ENCODE measurements at regions of chr2 and their contacts with region 1.

Region 1: DNA sequence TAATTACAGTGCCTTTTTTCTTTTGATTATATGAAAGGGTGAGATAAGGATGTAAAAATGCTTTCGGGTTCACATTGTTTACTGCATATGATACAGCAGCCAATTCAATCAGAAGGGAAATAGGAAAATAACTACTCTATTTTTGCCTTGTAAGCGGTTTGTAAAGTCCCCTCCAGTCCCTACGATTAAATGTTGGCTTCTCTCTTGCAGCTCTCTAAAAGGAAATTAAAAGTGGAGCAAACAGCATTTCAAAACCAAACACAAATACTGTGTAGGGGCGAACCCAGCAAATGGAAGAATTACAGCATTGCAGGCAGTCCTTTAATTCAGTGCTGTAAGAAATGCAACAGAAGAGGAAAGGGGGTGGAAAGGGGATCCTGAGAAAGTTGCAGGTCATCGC is 18.9 kb downstream of the LYPD6B start:
- DNase-seq: no peak
- H3K4me3 ChIP-seq: no peak overlapping the region
- H3K27me3 ChIP-seq: no peaks in the 10 kb centered on the region
- CTCF ChIP-seq: no peak

Region 2: DNA sequence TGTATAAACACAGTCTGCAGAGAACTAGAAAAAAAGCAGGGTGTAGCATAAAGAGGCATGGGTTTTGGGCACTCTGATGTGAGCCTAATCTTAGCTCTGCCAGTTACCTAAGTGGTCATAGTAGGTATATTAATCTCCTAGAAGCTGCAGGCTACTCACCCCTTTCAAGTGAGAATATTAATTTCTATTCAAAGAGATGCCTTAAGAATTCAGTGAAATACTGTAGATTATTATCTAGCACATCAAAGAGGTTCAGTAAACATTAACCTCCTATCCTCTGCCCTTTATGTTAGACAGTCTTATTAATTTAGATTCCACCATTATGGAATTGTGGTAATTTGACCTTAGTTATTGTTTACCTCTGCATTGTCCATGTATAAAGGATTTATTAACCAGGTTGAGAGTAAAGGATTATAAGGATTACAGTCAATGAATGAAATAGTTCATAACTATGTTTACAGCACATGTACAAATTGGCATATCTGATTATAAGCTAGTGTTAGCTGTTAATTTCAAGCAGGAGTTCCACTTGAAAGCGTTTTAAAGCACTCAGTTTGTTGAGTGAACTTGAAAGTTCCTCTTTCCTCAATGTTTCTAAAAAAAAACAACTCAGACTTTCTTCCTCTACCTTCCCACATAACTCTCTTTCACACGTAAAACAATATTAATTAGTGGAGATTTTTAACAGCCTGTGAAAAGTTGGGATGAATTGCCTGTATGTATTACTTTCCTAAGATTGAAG is 563.4 kb before region 1 on chr2:
- CTCF ChIA-PET with region 1: no interaction called
- POLR2A ChIA-PET with region 1: no interaction called
- DNase-seq: no peak
- H3K4me3 ChIP-seq: no peak overlapping the region
- H3K27me3 ChIP-seq: no peaks in the 10 kb centered on the region
- CTCF ChIP-seq: no peak

Region 3: GRCh38 chr2:149080946-149081345 is 23.5 kb after region 1 on chr2:
- CTCF ChIA-PET with region 1: no interaction called
- POLR2A ChIA-PET with region 1: interaction called, 24 read pairs
- DNase-seq: no peak
- H3K4me3 ChIP-seq: no peak overlapping the region
- H3K27me3 ChIP-seq: no peaks in the 10 kb centered on the region
- CTCF ChIP-seq: no peak

Region 4: DNA sequence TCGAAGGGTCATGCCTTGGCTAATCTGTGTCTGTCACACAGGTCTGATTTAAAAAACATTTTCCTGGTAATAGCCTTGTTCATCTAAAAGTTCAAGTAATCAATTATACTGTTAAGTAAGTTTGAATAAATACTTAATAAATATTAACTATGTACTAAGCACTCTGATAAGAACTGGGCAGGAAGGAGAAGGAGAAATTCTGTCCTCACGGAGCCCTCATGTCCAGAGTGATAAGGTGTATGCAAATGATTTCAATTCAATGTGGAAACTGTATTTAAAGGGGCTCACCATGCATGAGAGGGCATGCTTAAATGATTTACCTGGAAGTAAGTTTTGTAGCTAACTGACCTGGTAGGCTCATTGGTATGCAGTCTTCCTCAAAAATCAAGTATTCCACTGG is 179.0 kb after region 1 on chr2:
- CTCF ChIA-PET with region 1: no interaction called
- POLR2A ChIA-PET with region 1: no interaction called
- DNase-seq: no peak
- H3K4me3 ChIP-seq: no peak overlapping the region
- H3K27me3 ChIP-seq: no peaks in the 10 kb centered on the region
- CTCF ChIP-seq: no peak

Region 5: GRCh38 chr2:149346272-149346671 is 288.9 kb after region 1 on chr2:
- CTCF ChIA-PET with region 1: no interaction called
- POLR2A ChIA-PET with region 1: no interaction called
- DNase-seq: no peak
- H3K4me3 ChIP-seq: no peak overlapping the region
- H3K27me3 ChIP-seq: no peaks in the 10 kb centered on the region
- CTCF ChIP-seq: no peak

Measured in BJ (cell line).